ENCODE measurements at regions of chr14 and their contacts with region 1.

Region 1: GRCh38 chr14:37874429-37875191 is 279.2 kb downstream of the TTC6 start:
- DNase-seq: peak; percentile 90
- H3K4me3 ChIP-seq: no peak overlapping the region
- H3K27ac ChIP-seq: no peak overlapping the region
- H3K4me1 ChIP-seq: peaks cover 0 to 8% (median 3%) of the 10 kb centered on the region in 4 donors
- H3K27me3 ChIP-seq: no peaks in the 10 kb centered on the region
- CTCF ChIP-seq: peak; percentile 75 to 90 (median 82)
- EP300 ChIP-seq: no peak
- POLR2A ChIP-seq: no peak

Region 2: DNA sequence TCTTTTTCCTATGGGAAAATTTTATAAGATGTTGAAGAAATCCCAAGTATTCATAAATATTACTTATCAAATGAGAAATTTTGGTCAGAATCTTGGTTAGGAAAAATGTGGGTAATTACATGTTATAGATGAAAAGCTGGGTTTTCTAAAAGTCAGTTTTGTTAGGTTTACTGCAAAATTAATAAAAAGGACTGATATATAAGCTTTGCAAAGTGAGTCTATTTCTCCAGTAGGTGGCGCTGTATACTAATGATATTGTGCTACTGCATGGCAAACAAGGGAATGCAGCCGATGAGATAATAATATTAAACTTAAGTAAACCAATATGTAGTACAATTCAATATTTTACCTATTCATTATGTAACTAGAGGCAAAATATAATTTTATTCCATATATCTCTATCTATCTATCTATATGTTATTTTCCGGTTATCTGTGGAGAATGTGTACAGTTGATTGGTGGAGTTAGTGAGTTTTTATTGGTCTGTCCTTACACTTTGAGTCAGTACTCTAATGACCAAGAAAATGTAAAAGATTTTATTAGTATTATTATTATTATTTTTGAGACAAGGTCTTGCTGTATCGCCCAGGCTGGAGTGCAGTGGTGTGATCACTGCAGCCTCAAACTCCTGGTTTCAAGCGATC is 643.9 kb before region 1 on chr14:
- in situ Hi-C with region 1: loop called in 1 of 4 experiments (anchors 10 kb)
- intact Hi-C with region 1: no loop called
- DNase-seq: no peak
- H3K4me3 ChIP-seq: no peak overlapping the region
- H3K27ac ChIP-seq: no peak overlapping the region
- H3K4me1 ChIP-seq: no peaks in the 10 kb centered on the region
- H3K27me3 ChIP-seq: no peaks in the 10 kb centered on the region
- CTCF ChIP-seq: peak; percentile 54 to 87 (median 76)
- EP300 ChIP-seq: no peak
- POLR2A ChIP-seq: no peak

Region 3: DNA sequence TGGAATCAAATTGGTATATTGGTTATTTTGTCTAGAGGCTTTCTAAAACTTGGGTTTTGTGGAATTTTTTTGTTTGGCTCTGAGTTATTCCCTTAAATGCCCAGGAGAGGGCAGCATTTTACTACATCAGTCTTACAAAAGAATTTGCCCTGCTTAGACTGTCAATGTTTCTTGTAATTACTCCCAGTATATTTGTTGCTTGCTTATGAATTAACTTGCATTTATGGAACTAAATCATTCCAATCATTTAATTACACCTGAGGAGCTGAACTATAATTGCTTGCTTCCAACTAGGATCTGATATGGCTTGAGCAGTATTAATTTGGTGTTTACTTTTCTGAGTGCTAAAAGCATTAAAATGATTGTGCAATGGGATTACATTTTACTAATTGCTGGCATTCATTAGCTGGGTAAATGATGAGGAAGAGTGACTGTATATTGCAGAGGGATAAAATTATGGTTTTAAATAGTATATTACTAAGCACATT is 628.1 kb before region 1 on chr14:
- in situ Hi-C with region 1: loop called in 3 of 4 experiments (anchors 10 to 25 kb)
- intact Hi-C with region 1: no loop called
- DNase-seq: no peak
- H3K4me3 ChIP-seq: no peak overlapping the region
- H3K27ac ChIP-seq: no peak overlapping the region
- H3K4me1 ChIP-seq: peaks cover 0 to 9% (median 0%) of the 10 kb centered on the region in 4 donors
- H3K27me3 ChIP-seq: no peaks in the 10 kb centered on the region
- CTCF ChIP-seq: peak; percentile 73 to 83 (median 78)
- EP300 ChIP-seq: no peak
- POLR2A ChIP-seq: no peak

Region 4: GRCh38 chr14:37253905-37254304 is 620.7 kb before region 1 on chr14:
- in situ Hi-C with region 1: loop called in 3 of 4 experiments (anchors 10 to 25 kb)
- intact Hi-C with region 1: no loop called
- DNase-seq: no peak
- H3K4me3 ChIP-seq: no peak overlapping the region
- H3K27ac ChIP-seq: no peak overlapping the region
- H3K4me1 ChIP-seq: no peaks in the 10 kb centered on the region
- H3K27me3 ChIP-seq: no peaks in the 10 kb centered on the region
- CTCF ChIP-seq: no peak
- EP300 ChIP-seq: no peak
- POLR2A ChIP-seq: no peak

Region 5: GRCh38 chr14:37709419-37710195 is 165.0 kb before region 1 on chr14:
- in situ Hi-C with region 1: loop called in 1 of 4 experiments (anchors 10 kb)
- intact Hi-C with region 1: loop called (anchors 2 kb)
- DNase-seq: no peak
- H3K4me3 ChIP-seq: no peak overlapping the region
- H3K27ac ChIP-seq: no peak overlapping the region
- H3K4me1 ChIP-seq: no peaks in the 10 kb centered on the region
- H3K27me3 ChIP-seq: no peaks in the 10 kb centered on the region
- CTCF ChIP-seq: peak in 4 of 5 experiments; percentile 31 to 43 (median 33)
- EP300 ChIP-seq: no peak
- POLR2A ChIP-seq: no peak

Region 6: DNA sequence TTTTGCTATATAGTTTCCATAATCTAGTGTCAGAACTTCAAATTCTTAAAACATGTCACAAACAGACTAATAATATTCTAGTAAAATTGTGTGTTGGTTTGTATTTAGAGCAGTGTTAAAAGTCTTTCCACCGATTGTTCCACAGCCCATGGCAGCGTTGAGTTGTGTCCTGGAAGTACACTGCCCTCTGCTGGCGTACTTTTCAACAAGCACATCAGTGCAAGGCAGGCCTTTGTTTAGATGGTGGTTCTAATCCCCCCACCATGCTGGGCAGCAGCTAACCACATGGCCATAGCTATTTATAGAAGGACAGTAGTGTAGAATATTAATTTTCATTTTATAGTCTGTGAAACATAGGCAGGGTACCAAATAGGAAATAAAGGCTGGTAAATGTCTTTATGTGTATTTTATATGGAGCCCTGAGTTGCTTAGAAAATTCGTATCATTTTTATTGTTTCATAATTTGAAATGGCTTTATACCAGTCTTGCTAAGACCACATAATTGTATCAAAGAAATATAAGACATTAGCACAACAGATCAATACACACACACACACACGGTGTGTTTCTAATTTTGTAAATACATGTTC is 993.0 kb after region 1 on chr14:
- in situ Hi-C with region 1: loop called in 1 of 4 experiments (anchors 25 kb)
- intact Hi-C with region 1: no loop called
- DNase-seq: peak; percentile 78
- H3K4me3 ChIP-seq: no peak overlapping the region
- H3K27ac ChIP-seq: no peak overlapping the region
- H3K4me1 ChIP-seq: peaks cover 0 to 42% (median 10%) of the 10 kb centered on the region in 4 donors
- H3K27me3 ChIP-seq: no peaks in the 10 kb centered on the region
- CTCF ChIP-seq: peak; percentile 73 to 85 (median 79)
- EP300 ChIP-seq: no peak
- POLR2A ChIP-seq: no peak

Region 7: DNA sequence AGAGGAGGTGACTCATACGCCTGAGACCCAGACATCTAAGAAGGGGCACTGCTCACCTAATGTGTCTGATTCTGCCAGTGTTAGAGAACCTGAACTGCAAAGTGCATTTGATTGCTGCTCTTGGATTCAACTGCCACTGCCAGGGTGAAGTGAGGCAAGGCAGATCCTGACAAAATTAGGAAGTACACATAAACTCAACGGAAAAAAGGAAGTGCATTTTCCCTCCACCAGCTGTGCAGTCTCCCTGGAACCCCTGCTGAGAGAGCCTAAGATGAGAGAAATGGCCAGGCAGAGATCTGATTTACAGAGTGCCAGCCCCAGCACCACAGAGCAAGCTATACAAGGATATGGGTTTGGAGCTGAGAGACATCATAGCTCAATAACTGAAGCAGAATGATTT is 1013.1 kb after region 1 on chr14:
- in situ Hi-C with region 1: no loop called
- intact Hi-C with region 1: no loop called
- DNase-seq: no peak
- H3K4me3 ChIP-seq: no peak overlapping the region
- H3K27ac ChIP-seq: no peak overlapping the region
- H3K4me1 ChIP-seq: no peaks in the 10 kb centered on the region
- H3K27me3 ChIP-seq: no peaks in the 10 kb centered on the region
- CTCF ChIP-seq: no peak
- EP300 ChIP-seq: no peak
- POLR2A ChIP-seq: no peak

Measured in transverse colon (tissue), 4 donors.